Transverse colon (tissue), 4 donors: ENCODE measurements at regions of chrX and their contacts with region 1.

Region 1: GRCh38 chrX:42477396-42477795 is 300.6 kb downstream of the PPP1R2C start:
- DNase-seq: no peak
- H3K4me3 ChIP-seq: no peak overlapping the region
- H3K27ac ChIP-seq: no peak overlapping the region
- H3K4me1 ChIP-seq: no peaks in the 10 kb centered on the region
- H3K27me3 ChIP-seq: no peaks in the 10 kb centered on the region
- CTCF ChIP-seq: no peak
- EP300 ChIP-seq: no peak
- POLR2A ChIP-seq: no peak

Region 2: DNA sequence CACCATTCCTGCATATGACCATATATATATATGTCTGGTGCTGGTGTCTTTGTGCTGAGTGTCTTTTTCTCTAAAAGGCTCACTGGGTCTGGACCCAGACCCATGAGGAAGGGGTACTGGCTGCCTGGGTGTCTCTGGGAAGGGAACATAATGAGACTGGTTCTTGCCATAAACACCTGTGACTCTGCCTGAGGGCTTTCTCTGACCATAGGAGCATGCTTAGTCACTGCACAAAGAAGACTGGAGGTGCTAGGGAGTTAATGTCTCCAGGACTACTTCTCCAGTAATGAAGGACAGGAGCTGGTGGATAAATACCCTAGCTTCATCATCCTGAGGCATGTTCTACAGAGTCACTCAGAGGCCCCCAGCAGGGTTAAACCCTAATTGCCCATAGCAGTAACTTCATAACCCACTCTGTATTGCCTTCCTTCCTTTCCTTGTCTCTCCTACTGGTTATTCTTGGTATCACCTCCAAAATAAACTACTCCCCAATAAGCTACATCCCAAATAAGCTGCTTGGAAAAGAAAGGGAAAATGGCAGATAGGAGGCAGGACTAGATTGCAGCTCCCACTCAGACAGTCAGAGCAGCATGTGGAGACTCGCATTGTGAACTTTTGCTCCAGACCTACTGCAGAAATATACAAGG is 506.9 kb before region 1 on chrX:
- in situ Hi-C with region 1: no loop called
- intact Hi-C with region 1: loop called (anchors 10 kb)
- DNase-seq: no peak
- H3K4me3 ChIP-seq: no peak overlapping the region
- H3K27ac ChIP-seq: no peak overlapping the region
- H3K4me1 ChIP-seq: no peaks in the 10 kb centered on the region
- H3K27me3 ChIP-seq: no peaks in the 10 kb centered on the region
- CTCF ChIP-seq: no peak
- EP300 ChIP-seq: no peak
- POLR2A ChIP-seq: no peak

Region 3: DNA sequence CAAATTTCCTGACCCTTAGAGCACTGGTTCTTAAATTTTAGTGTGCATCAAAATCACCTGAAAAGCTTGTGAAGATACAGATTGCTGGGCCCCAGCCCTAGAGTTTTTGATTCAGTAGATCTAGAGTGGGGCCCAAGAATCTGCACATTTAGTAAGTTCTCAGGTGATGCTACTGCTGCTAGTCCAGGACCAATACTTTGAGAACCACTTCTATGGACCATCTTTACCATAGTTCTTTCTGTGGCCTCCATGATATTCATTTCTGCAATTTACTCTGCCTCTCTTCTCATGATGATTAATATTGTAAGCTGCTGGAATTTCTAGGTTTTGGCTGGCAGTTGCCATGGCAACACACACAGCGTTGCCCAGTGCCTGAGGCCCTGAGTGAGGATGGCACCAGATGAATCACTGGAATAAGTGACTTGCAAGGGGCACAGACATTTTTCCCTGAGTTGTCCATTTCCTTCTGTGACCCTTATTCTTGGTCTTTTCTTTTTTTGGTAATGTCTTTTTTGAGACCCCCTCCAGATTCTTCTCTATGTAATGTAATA is 216.9 kb after region 1 on chrX:
- in situ Hi-C with region 1: no loop called
- intact Hi-C with region 1: no loop called
- DNase-seq: no peak
- H3K4me3 ChIP-seq: no peak overlapping the region
- H3K27ac ChIP-seq: no peak overlapping the region
- H3K4me1 ChIP-seq: no peaks in the 10 kb centered on the region
- H3K27me3 ChIP-seq: no peaks in the 10 kb centered on the region
- CTCF ChIP-seq: no peak
- EP300 ChIP-seq: no peak
- POLR2A ChIP-seq: no peak